A673 (cell line): ENCODE measurements at regions of chr17 and their contacts with region 1.

Region 1: GRCh38 chr17:68843522-68843921 is 111.7 kb downstream of the ABCA8 start:
- DNase-seq: no peak
- H3K4me3 ChIP-seq: no peak overlapping the region
- H3K27ac ChIP-seq: no peak overlapping the region
- H3K4me1 ChIP-seq: peaks cover 11% of the 10 kb centered on the region
- H3K27me3 ChIP-seq: no peaks in the 10 kb centered on the region
- CTCF ChIP-seq: no peak

Region 2: GRCh38 chr17:69388822-69389442 is 545.4 kb after region 1 on chr17:
- CTCF ChIA-PET with region 1: no interaction called
- POLR2A ChIA-PET with region 1: interaction called, 19 read pairs
- intact Hi-C with region 1: no loop called
- DNase-seq: peak; percentile 20
- H3K4me3 ChIP-seq: no peak overlapping the region
- H3K27ac ChIP-seq: no peak overlapping the region
- H3K4me1 ChIP-seq: no peaks in the 10 kb centered on the region
- H3K27me3 ChIP-seq: no peaks in the 10 kb centered on the region
- CTCF ChIP-seq: no peak